ENCODE measurements at regions of chr20 and their contacts with region 1.

Region 1: GRCh38 chr20:8766868-8767390 is 302.0 kb upstream of the PLCB4 start:
- DNase-seq: no peak
- H3K4me3 Mint-ChIP-seq: no peak overlapping the region
- H3K27ac Mint-ChIP-seq: no peak overlapping the region
- H3K4me1 Mint-ChIP-seq: no peaks in the 10 kb centered on the region
- H3K27me3 Mint-ChIP-seq: no peaks in the 10 kb centered on the region

Region 2: GRCh38 chr20:8744228-8744844 is 22.6 kb before region 1 on chr20:
- CTCF ChIA-PET with region 1: no interaction called
- DNase-seq: no peak
- H3K4me3 Mint-ChIP-seq: no peak overlapping the region
- H3K27ac Mint-ChIP-seq: no peak overlapping the region
- H3K4me1 Mint-ChIP-seq: no peaks in the 10 kb centered on the region
- H3K27me3 Mint-ChIP-seq: no peaks in the 10 kb centered on the region

Region 3: DNA sequence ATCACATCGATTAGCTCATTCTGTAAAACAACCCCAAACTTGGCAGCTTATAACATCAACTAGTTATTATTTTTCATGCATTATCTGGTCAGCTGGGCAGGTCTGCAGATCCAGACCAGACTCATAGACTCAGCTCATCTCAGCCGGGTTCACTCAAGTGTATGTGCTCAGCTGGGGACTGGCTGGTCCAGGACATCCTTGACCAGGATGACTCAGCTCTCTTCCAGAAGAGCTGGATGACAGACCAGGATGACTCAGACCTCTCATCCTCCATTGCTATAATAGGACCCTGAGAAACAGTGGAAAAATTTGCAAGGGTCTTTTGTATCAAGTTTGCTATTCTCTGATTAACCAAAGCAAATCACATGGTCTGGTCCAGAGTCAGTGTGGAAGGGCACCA is 10.5 kb before region 1 on chr20:
- CTCF ChIA-PET with region 1: interaction called, 10 read pairs
- DNase-seq: no peak
- H3K4me3 Mint-ChIP-seq: no peak overlapping the region
- H3K27ac Mint-ChIP-seq: no peak overlapping the region
- H3K4me1 Mint-ChIP-seq: no peaks in the 10 kb centered on the region
- H3K27me3 Mint-ChIP-seq: no peaks in the 10 kb centered on the region

Region 4: DNA sequence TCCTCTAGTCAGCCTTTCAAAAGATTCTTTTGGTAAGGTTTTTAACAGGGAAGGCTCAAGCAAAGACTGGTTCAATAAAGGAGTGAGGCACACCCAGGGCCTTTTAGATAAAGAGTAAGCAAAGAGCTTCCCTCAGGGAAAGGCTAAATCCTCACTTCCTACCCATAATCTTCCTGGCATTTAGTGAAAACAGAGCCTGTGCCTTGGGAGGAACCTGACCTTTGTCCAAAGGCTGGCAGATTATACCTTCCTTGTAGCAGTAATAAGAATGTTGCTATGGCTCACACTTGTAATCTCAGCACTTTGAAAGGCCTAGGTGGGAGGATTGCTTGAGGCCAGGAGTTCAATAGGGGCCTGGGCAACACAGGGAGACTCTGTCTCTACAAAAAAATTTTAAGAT is 21.9 kb after region 1 on chr20:
- CTCF ChIA-PET with region 1: no interaction called
- DNase-seq: no peak
- H3K4me3 Mint-ChIP-seq: no peak overlapping the region
- H3K27ac Mint-ChIP-seq: no peak overlapping the region
- H3K4me1 Mint-ChIP-seq: no peaks in the 10 kb centered on the region
- H3K27me3 Mint-ChIP-seq: no peaks in the 10 kb centered on the region

Region 5: DNA sequence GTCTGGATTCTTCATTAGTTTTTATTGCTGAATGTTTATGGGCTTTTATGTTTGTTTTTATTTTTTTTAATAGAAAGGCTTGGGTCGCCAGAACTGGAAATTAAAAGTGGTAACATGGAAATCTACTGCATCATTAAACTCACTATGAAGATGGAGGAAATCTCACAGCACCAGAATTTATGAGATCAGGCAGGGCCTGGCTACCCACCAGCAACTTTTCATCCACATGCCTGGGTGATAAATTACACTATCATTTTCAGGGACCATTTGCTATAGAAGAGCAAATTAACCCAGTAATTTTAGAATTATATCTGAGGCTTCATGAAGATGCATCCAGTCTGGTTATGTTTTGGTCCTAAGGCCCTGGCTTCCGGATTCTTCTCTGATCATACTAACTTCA is 244.2 kb after region 1 on chr20:
- CTCF ChIA-PET with region 1: no interaction called
- DNase-seq: no peak
- H3K4me3 Mint-ChIP-seq: no peak overlapping the region
- H3K27ac Mint-ChIP-seq: no peak overlapping the region
- H3K4me1 Mint-ChIP-seq: no peaks in the 10 kb centered on the region
- H3K27me3 Mint-ChIP-seq: no peaks in the 10 kb centered on the region

Measured in activated naive CD4-positive, alpha-beta T cell treated with anti-CD3 and anti-CD28 coated beads, Interleukin-2, amount 10 ng/mL, durations not matched to agents 7 days and 5 days (primary cell).